ENCODE measurements at regions of chr3 and their contacts with region 1.

Region 1: GRCh38 chr3:114290911-114291901 is 2.6 kb upstream of the TIGIT start:
- DNase-seq: peak; percentile 95
- ATAC-seq: peak; percentile 79
- H3K4me3 Mint-ChIP-seq: peak overlapping the region; percentile 80
- H3K27ac Mint-ChIP-seq: peak overlapping the region; percentile 95
- H3K4me1 Mint-ChIP-seq: peaks cover 57% of the 10 kb centered on the region
- H3K27me3 Mint-ChIP-seq: no peaks in the 10 kb centered on the region
- CTCF ChIP-seq: peak; percentile 94

Region 2: GRCh38 chr3:113873814-113874526 is 417.2 kb before region 1 on chr3:
- CTCF ChIA-PET with region 1: no interaction called
- POLR2A ChIA-PET with region 1: no interaction called
- intact Hi-C with region 1: no loop called
- DNase-seq: no peak
- ATAC-seq: no peak
- H3K4me3 Mint-ChIP-seq: no peak overlapping the region
- H3K27ac Mint-ChIP-seq: no peak overlapping the region
- H3K4me1 Mint-ChIP-seq: no peaks in the 10 kb centered on the region
- H3K27me3 Mint-ChIP-seq: peaks cover 2% of the 10 kb centered on the region
- CTCF ChIP-seq: no peak

Region 3: DNA sequence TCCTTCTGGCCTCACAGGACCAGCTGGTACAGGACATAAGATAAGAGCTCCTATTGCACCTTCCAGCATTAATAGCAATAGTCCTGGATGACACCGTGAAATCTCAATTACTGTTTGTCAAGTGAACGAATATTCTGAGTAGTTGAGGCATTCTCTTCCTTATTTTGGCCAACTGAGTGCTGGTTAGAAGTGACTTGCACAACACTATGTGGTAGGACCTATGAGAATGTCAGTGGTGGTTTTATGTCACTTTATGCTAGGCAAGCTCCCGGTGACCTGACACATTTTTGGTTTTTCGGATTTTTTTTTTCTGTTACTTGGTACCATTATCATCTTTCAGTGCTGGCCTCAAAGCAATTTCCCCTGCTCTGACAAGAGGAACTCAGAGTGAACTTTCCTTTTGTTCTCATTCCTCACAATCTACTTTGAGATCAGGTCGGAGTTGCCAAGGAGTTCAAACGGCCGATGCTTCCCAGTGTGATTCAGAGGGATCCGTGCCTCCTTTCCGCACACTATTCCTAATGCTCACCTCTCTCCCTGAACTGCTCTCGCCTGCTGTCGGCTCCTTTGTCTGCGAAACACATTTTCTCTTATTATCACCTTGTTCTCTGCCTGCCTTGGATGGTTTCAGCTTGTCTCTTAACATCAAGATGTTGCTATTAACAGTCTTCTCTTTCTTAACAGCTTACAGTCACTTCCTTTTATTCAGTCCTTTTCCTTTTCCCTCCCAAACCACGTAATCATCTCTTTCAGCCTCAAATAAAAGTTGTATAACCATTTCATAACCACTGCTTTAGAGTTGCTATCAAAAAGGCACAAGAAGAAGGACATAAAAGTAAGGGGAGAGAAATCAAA is 198.8 kb before region 1 on chr3:
- CTCF ChIA-PET with region 1: no interaction called
- POLR2A ChIA-PET with region 1: no interaction called
- intact Hi-C with region 1: no loop called
- DNase-seq: no peak
- ATAC-seq: no peak
- H3K4me3 Mint-ChIP-seq: no peak overlapping the region
- H3K27ac Mint-ChIP-seq: no peak overlapping the region
- H3K4me1 Mint-ChIP-seq: peaks cover 5% of the 10 kb centered on the region
- H3K27me3 Mint-ChIP-seq: peaks cover 4% of the 10 kb centered on the region
- CTCF ChIP-seq: no peak

Region 4: DNA sequence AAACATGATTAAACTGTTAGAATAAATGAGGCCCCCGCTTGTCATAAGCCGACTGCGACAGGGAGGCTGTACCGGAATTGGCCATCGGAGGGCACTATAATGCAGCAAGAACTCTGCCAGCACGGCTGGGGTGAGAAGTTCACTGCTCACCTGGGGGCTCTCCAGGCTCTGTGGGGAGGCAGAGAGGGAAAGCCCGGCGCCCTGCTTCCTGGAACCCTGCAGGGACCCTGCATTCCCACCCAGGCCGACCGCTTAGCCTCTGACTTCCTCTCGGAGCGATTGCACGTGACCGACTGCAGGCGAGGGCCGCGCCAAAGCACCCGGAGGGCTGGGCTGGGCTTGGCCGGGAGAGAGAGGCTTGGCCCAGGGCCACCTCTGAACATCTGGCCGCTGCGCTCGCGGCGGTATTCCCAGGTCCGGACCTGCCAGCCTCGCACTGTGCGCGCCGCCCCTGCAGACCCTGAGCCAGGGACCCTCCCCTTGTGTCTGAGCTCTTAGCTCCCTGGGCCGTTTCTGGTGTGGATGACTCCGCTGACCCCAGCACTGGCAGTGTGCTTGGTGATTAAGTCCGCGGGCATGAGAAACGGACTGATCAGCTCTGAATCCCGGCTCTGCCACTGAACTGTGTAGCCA is 138.6 kb before region 1 on chr3:
- CTCF ChIA-PET with region 1: interaction called, 33 read pairs
- POLR2A ChIA-PET with region 1: interaction called, 3 read pairs
- intact Hi-C with region 1: loop called (anchors 5 kb)
- DNase-seq: peak; percentile 92
- ATAC-seq: peak; percentile 99
- H3K4me3 Mint-ChIP-seq: peak overlapping the region; percentile 22
- H3K27ac Mint-ChIP-seq: no peak overlapping the region
- H3K4me1 Mint-ChIP-seq: peaks cover 13% of the 10 kb centered on the region
- H3K27me3 Mint-ChIP-seq: no peaks in the 10 kb centered on the region
- CTCF ChIP-seq: peak; percentile 95

Region 5: GRCh38 chr3:114242947-114243346 is 48.3 kb before region 1 on chr3:
- CTCF ChIA-PET with region 1: interaction called, 11 read pairs
- POLR2A ChIA-PET with region 1: no interaction called
- intact Hi-C with region 1: no loop called
- DNase-seq: peak; percentile 58
- ATAC-seq: peak; percentile 77
- H3K4me3 Mint-ChIP-seq: no peak overlapping the region
- H3K27ac Mint-ChIP-seq: peak overlapping the region; percentile 29
- H3K4me1 Mint-ChIP-seq: peaks cover 23% of the 10 kb centered on the region
- H3K27me3 Mint-ChIP-seq: no peaks in the 10 kb centered on the region
- CTCF ChIP-seq: no peak

Region 6: DNA sequence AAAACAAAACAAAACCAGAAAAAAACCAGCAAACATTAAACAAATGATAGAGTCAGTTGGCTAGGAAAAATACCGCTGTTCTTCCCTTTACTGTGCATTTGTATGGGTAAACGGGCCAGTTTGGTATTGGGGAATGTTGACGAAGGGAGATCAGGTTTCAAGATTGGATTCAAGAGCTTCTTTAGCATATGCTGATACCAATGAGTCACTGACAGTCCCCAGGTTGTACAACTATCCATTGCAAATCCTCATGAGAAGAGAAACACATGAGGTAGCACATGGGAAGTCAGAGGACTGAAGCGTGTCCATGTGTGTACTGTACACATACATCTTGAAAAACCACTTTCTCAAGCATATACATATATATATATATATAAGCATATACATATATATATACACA is 28.2 kb after region 1 on chr3:
- CTCF ChIA-PET with region 1: interaction called, 14 read pairs
- POLR2A ChIA-PET with region 1: interaction called, 7 read pairs
- intact Hi-C with region 1: no loop called
- DNase-seq: no peak
- ATAC-seq: no peak
- H3K4me3 Mint-ChIP-seq: peak overlapping the region; percentile 7
- H3K27ac Mint-ChIP-seq: peak overlapping the region; percentile 85
- H3K4me1 Mint-ChIP-seq: peaks cover 87% of the 10 kb centered on the region
- H3K27me3 Mint-ChIP-seq: no peaks in the 10 kb centered on the region
- CTCF ChIP-seq: no peak

Region 7: DNA sequence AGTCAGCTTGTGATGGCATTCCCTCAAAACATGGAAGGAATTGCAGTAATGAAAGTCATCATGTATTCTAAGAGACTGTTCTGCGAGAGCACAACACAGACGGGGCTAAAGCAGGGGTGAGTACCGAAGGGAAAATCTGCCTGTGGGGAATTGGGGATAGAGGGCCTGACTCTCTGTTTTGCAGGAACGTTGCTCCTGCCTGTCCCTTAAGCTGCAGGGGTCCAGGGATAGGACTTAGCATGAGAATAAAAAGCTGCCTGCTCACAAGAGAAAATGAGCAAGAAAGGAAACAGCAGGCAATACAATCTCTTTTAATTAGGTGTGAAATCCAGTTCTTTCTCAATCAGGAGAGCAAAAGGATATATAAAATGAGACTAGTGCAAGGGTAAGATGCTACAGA is 64.9 kb after region 1 on chr3:
- CTCF ChIA-PET with region 1: interaction called, 14 read pairs
- POLR2A ChIA-PET with region 1: interaction called, 5 read pairs
- intact Hi-C with region 1: no loop called
- DNase-seq: no peak
- ATAC-seq: no peak
- H3K4me3 Mint-ChIP-seq: no peak overlapping the region
- H3K27ac Mint-ChIP-seq: no peak overlapping the region
- H3K4me1 Mint-ChIP-seq: peaks cover 3% of the 10 kb centered on the region
- H3K27me3 Mint-ChIP-seq: no peaks in the 10 kb centered on the region
- CTCF ChIP-seq: no peak

Region 8: GRCh38 chr3:114418724-114419543 is 127.7 kb after region 1 on chr3:
- CTCF ChIA-PET with region 1: interaction called, 28 read pairs
- POLR2A ChIA-PET with region 1: no interaction called
- intact Hi-C with region 1: loop called (anchors 1 kb)
- DNase-seq: no peak
- ATAC-seq: peak; percentile 71
- H3K4me3 Mint-ChIP-seq: peak overlapping the region; percentile 55
- H3K27ac Mint-ChIP-seq: peak overlapping the region; percentile 80
- H3K4me1 Mint-ChIP-seq: peaks cover 33% of the 10 kb centered on the region
- H3K27me3 Mint-ChIP-seq: no peaks in the 10 kb centered on the region
- CTCF ChIP-seq: peak; percentile 96

Region 9: GRCh38 chr3:114697401-114697800 is 406.2 kb after region 1 on chr3:
- CTCF ChIA-PET with region 1: no interaction called
- POLR2A ChIA-PET with region 1: no interaction called
- intact Hi-C with region 1: no loop called
- DNase-seq: no peak
- ATAC-seq: no peak
- H3K4me3 Mint-ChIP-seq: no peak overlapping the region
- H3K27ac Mint-ChIP-seq: no peak overlapping the region
- H3K4me1 Mint-ChIP-seq: peaks cover 8% of the 10 kb centered on the region
- H3K27me3 Mint-ChIP-seq: no peaks in the 10 kb centered on the region
- CTCF ChIP-seq: no peak

Measured in activated CD8-positive, alpha-beta T cell treated with anti-CD3 and anti-CD28 coated beads for 36 hours (primary cell).